Adrenal gland (tissue), 19 donors: ENCODE measurements at regions of chr5 and their contacts with region 1.

Region 1: GRCh38 chr5:138408023-138408422 is 30.8 kb upstream of the REEP2 start:
- DNase-seq: no peak
- H3K4me3 ChIP-seq: no peak overlapping the region
- H3K27ac ChIP-seq: no peak overlapping the region
- H3K4me1 ChIP-seq: no peaks in the 10 kb centered on the region
- H3K27me3 ChIP-seq: no peaks in the 10 kb centered on the region
- CTCF ChIP-seq: no peak
- POLR2A ChIP-seq: no peak

Region 2: GRCh38 chr5:138213161-138214029 is 194.6 kb before region 1 on chr5 and contains the start of gene CDC23:
- intact Hi-C with region 1: loop called in 1 of 2 experiments (anchors 10 kb)
- DNase-seq: peak; percentile 92 to 98 (median 96)
- H3K4me3 ChIP-seq: peak within 1 kb of the TSS; percentile 69 to 95 (median 81)
- H3K27ac ChIP-seq: peak within 1 kb of the TSS in 4 of 5 donors; percentile 67 to 88 (median 72)
- H3K4me1 ChIP-seq: peaks cover 10 to 22% of the 10 kb centered on the region in 2 donors
- H3K27me3 ChIP-seq: no peaks in the 10 kb centered on the region
- CTCF ChIP-seq: no peak
- POLR2A ChIP-seq: peak in 1 of 2 donors; percentile 54
- total RNA-seq, gene CDC23: 11.2 to 57.6 (median 20.6) TPM

Region 3: DNA sequence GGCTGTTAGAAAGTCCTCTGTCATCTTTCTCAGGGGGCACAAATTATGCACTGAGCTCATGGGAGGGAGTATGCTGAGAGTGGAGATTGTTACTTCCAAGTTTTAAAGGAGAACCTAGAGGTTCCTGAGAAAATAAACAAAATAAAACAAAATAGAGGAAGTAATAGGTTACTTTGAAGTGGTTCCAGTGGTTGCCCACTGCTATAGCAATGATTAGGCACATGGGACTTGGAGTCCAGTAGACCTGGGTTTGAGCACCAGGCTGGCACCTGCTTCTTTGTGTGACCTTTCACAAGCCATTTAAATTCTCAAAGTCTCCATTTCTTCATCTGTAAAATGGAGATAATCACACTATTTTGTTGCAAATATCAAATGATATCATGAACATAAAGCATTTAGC is 181.1 kb before region 1 on chr5:
- intact Hi-C with region 1: loop called in 1 of 2 experiments (anchors 5 kb)
- DNase-seq: no peak
- H3K4me3 ChIP-seq: no peak overlapping the region
- H3K27ac ChIP-seq: no peak overlapping the region
- H3K4me1 ChIP-seq: peaks cover 0 to 26% of the 10 kb centered on the region in 2 donors
- H3K27me3 ChIP-seq: no peaks in the 10 kb centered on the region
- CTCF ChIP-seq: no peak
- POLR2A ChIP-seq: no peak

Region 4: DNA sequence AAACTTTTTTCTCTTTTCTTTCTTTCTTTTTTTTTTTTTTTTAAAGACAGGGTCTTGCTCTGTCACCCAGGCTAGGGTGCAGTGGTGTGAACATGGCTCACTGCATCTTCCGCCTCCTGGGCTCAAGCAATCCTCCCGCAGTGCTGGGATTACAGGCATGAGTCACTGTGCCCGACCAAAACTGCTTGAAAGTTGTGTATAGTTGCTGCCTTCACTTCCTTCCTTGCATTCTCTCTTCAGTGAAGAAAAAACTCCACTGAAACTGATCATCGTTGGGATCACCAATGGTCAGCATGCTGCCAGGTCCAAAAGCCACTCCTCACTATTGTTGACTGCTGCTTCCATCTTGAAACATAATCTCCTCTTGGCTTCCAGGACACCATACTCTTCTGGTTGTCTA is 278.6 kb after region 1 on chr5:
- intact Hi-C with region 1: no loop called
- DNase-seq: no peak
- H3K4me3 ChIP-seq: no peak overlapping the region
- H3K27ac ChIP-seq: no peak overlapping the region
- H3K4me1 ChIP-seq: peaks cover 0 to 9% of the 10 kb centered on the region in 2 donors
- H3K27me3 ChIP-seq: no peaks in the 10 kb centered on the region
- CTCF ChIP-seq: no peak
- POLR2A ChIP-seq: no peak